ENCODE measurements at regions of chr7 and their contacts with region 1.

Region 1: DNA sequence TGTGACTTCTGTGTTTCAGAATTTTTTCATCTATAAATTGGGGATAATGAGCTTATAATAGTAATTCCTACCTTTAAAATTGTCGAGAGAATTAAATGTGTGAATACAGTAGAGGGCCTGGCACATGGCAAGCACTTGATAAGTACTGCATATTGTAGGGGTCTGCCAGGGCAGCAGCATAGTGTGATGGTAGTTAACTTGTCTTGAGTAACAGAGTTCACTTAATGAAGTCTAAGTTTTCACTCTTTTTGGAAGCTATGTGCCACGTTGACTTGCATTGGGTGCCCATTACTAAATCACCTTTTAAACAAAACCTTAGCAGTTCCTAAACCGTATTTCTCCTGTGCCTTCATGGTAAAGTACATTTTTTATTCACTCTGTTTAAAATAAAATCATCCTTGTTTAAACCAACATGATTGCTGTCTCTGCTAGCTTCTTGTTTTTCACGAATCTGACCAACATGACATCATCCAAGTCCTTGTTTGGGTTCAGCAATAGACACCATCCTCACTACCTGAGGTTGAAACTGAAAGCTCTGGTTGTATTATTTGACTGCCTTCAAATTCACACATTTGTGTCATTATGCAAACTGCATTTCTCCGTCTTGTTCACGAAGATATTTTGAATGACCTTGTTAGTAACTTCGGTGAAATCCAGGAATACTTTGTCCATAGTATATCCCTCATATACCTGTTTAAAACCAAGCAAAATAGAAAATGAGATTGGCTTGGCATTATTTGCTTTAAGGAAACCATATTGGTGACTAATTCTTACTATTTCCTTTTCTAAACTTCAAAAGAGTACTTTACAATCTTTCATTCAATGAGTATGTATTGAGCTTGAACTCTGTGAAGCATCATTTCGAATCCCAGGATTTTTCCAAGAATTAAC is 340.2 kb downstream of the SUGCT start:
- ATAC-seq: no peak
- H3K4me3 ChIP-seq: no peak overlapping the region
- H3K27ac ChIP-seq: no peak overlapping the region
- H3K4me1 ChIP-seq: peaks cover 0 to 5% of the 10 kb centered on the region in 2 donors

Region 2: GRCh38 chr7:40329601-40330153 is 145.4 kb before region 1 on chr7:
- in situ Hi-C with region 1: loop called in 1 of 9 experiments (anchors 25 kb)
- ATAC-seq: peak in 5 of 8 experiments; percentile 71 to 90 (median 80)
- H3K4me3 ChIP-seq: no peak overlapping the region
- H3K27ac ChIP-seq: no peak overlapping the region
- H3K4me1 ChIP-seq: peaks cover 0 to 5% of the 10 kb centered on the region in 2 donors

Region 3: DNA sequence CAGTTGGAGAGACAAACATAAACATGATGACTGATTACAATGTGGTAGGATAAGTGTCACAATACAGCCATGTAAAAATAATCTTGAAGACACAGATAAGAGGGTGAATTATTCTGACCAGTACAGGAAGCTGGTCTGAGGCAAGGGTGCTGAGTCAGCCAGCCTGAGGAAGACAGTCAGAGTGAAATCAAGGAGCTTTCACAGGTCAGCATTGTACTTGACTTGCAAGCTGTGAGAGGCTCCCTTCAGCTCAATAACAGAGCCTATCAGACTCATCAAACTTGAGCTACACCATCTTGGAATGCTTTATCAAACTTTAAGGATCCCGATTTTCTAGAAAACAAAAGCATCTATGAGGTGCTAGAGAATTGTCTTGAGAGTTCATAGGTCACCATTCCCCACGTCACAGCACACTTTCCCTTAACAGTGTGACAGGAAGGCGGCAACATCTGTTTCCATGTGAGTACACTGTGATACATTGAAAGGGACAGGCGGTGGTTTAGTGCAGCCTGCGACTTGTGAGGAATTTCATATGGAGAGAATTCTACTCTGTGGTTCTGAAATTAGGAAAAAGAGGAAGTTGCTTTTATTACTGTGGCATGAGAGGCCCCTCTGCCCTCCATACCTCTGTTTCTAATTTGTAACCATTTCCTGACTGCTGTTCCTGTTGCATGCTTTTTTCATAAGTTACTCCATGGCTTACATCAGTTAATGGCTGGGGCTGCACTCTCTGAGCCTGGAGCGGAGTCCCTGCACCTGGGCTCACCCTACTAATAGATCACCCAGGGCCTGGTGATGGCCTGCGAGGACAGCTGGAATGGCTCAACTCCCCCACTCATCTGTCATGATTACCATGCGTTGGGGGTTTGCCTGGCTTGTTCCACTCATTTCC is 76.9 kb after region 1 on chr7:
- in situ Hi-C with region 1: no loop called
- ATAC-seq: peak in 7 of 8 experiments; percentile 50 to 86 (median 78)
- H3K4me3 ChIP-seq: no peak overlapping the region
- H3K27ac ChIP-seq: no peak overlapping the region
- H3K4me1 ChIP-seq: peaks cover 0 to 9% of the 10 kb centered on the region in 2 donors

Region 4: GRCh38 chr7:40808378-40808942 is 333.4 kb after region 1 on chr7:
- in situ Hi-C with region 1: no loop called
- ATAC-seq: peak in 2 of 8 experiments; percentile 72 to 79
- H3K4me3 ChIP-seq: no peak overlapping the region
- H3K27ac ChIP-seq: no peak overlapping the region
- H3K4me1 ChIP-seq: no peaks in the 10 kb centered on the region

Measured in motor neuron (in vitro differentiated cells).